Cardiac septum (tissue), 1 donor: ENCODE measurements at regions of chr5 and their contacts with region 1.

Region 1: GRCh38 chr5:112338681-112339337 is 80.3 kb downstream of the EPB41L4A start:
- DNase-seq: no peak

Region 2: DNA sequence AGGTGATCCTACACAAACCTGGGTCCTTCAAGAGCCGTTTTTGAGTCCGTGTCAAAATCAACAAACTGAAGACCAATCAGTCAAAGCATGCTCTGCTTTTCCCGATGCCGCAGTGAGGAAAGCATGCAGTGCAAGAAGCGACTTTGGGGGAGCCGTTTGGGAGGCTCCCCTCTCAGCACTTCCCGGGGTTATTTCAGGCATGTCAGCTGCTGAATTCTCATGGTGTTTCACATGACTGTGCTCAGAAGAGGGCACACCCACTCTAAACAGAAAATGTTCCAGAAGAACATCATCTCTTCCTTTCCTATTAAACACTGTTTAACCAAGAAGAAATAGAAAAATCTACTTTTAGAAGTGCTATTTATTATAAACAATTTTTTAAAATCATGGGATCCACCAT is 45.2 kb before region 1 on chr5:
- intact Hi-C with region 1: loop called (anchors 5 kb)
- DNase-seq: no peak